K562 (cell line): ENCODE measurements at regions of chr2 and their contacts with region 1.

Region 1: DNA sequence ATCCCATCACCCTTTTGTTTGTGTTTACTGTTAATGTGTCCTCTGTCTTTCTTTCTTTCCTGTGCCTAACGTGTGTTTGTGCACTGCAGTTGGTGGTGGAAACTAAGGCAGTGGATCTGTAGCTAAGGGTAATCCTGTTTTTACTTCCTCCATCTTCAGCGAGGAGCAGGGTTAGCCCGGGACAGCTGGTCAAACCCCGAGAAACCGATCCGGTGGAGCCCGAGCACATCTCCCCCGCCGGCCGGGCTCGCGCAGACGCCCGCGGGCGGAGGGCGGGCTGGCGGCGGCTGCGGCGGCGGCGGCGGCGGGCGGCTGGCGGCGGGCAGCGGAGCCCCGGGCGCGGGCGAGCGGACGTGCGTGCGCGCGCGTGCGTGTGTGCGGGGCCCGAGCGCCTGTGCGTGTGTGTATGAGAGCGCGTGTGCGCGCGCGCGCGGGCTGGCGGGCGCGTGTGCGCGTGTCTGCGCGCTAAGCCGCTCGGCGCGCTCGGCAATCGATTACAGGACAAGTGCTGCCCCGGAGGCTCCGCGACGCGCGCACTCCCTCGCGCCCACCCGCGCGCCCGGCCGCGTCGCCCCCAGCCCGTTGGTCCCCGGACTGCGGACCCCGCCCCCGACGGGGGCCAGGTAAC is at the start of gene IKZF2:
- DNase-seq: peak; percentile 52 to 78 (median 66)
- ATAC-seq: peak; percentile 95
- H3K4me3 ChIP-seq: peak within 1 kb of the TSS; percentile 51
- H3K27ac ChIP-seq: no peak within 1 kb of the TSS
- H3K4me1 ChIP-seq: peaks cover 0 to 6% of the 10 kb centered on the region in 2 experiments; a peak in 1 of 5 replicates
- H3K27me3 ChIP-seq: no peaks in the 10 kb centered on the region; a peak in 1 of 5 replicates
- CTCF ChIP-seq: no peak
- EP300 ChIP-seq: no peak
- POLR2A ChIP-seq: no peak
- RAD21 ChIP-seq: no peak
- polyA plus RNA-seq, gene IKZF2: 0.04 to 0.06 TPM

Region 2: DNA sequence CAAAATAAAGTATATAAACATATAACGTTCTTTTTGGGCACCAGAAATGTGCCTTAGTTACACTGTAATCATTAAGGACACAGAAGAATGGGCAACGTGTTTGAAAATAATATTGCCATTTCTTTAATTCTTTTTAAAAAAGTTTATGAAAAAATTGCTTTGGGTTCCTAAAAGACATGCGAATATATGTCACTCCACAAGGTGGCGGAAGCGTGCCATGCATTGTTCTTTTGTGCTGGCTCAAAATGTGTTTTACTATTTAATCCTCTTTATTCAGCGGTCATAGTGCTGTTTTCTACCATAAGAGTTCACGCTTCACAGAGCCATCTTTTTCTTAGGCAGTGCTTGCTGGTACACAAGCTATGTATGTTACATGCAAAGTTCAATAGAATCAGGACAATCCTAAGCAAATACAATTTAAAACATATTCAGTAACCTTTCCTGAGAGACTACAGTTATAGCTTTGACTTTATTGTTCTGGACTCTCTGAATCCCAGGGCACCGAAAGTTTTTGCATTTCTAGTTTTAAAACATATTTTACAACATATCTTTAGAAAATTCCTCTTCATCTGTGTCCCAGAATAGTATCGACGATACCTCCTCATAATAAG is 465.2 kb before region 1 on chr2:
- CTCF ChIA-PET with region 1: no interaction called
- POLR2A ChIA-PET with region 1: no interaction called
- in situ Hi-C with region 1: no loop called
- intact Hi-C with region 1: loop called (anchors 2 kb)
- DNase-seq: peak; percentile 6 to 45 (median 17)
- ATAC-seq: no peak
- H3K4me3 ChIP-seq: no peak overlapping the region
- H3K27ac ChIP-seq: no peak overlapping the region
- H3K4me1 ChIP-seq: no peaks in the 10 kb centered on the region
- H3K27me3 ChIP-seq: no peaks in the 10 kb centered on the region
- CTCF ChIP-seq: peak; percentile 26 to 70 (median 50); a peak in 5 of 6 replicates
- EP300 ChIP-seq: no peak
- POLR2A ChIP-seq: no peak
- RAD21 ChIP-seq: peak; percentile 62 to 64

Region 3: DNA sequence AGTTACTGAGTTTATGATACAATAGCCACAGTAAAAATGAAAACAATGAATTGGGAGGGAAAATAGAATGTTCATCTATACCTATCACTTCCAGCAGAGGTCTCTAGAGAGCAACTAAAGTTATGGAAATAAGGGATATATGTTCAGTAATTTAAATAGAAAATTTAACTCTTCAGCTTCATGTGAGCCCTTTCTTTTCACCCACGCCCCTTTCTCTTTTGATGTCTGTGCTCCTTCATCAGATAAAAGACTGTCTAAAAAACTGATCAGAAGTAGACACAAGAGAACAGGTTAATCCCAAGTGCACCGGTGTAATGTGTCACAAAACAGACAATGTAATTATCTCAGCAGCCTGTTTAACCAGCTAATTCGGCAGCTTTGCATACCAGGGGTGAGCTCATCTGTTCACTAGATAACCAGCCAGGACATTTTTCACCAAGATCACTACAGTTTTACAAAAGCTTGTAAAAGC is 374.5 kb before region 1 on chr2:
- CTCF ChIA-PET with region 1: interaction called, 3 read pairs
- POLR2A ChIA-PET with region 1: no interaction called
- in situ Hi-C with region 1: no loop called
- intact Hi-C with region 1: loop called (anchors 2 kb)
- DNase-seq: peak in 1 of 4 experiments; percentile 3
- ATAC-seq: no peak
- H3K4me3 ChIP-seq: no peak overlapping the region
- H3K27ac ChIP-seq: no peak overlapping the region
- H3K4me1 ChIP-seq: no peaks in the 10 kb centered on the region
- H3K27me3 ChIP-seq: no peaks in the 10 kb centered on the region
- CTCF ChIP-seq: peak in 1 of 3 experiments; percentile 32; a peak in 2 of 6 replicates
- EP300 ChIP-seq: no peak
- POLR2A ChIP-seq: no peak
- RAD21 ChIP-seq: peak; percentile 21 to 43; a peak in 3 of 4 replicates

Region 4: GRCh38 chr2:212863185-212863588 is 288.4 kb before region 1 on chr2:
- CTCF ChIA-PET with region 1: no interaction called
- POLR2A ChIA-PET with region 1: no interaction called
- in situ Hi-C with region 1: no loop called
- intact Hi-C with region 1: loop called (anchors 1 kb)
- DNase-seq: peak in 3 of 4 experiments; percentile 10 to 23 (median 15)
- ATAC-seq: no peak; the same call in 2 of the 3 replicates
- H3K4me3 ChIP-seq: no peak overlapping the region
- H3K27ac ChIP-seq: no peak overlapping the region
- H3K4me1 ChIP-seq: no peaks in the 10 kb centered on the region
- H3K27me3 ChIP-seq: no peaks in the 10 kb centered on the region
- CTCF ChIP-seq: peak; percentile 26 to 53 (median 26); a peak in 5 of 6 replicates
- EP300 ChIP-seq: no peak
- POLR2A ChIP-seq: no peak
- RAD21 ChIP-seq: peak; percentile 54 to 74